Cardiac septum (tissue), 1 donor: ENCODE measurements at regions of chr4 and their contacts with region 1.

Region 1: GRCh38 chr4:25098964-25099891 is 61.0 kb downstream of the SEPSECS start:
- DNase-seq: peak; percentile 89

Region 2: GRCh38 chr4:25088093-25088952 is 10.9 kb before region 1 on chr4:
- intact Hi-C with region 1: loop called (anchors 1 kb)
- DNase-seq: peak; percentile 84

Region 3: DNA sequence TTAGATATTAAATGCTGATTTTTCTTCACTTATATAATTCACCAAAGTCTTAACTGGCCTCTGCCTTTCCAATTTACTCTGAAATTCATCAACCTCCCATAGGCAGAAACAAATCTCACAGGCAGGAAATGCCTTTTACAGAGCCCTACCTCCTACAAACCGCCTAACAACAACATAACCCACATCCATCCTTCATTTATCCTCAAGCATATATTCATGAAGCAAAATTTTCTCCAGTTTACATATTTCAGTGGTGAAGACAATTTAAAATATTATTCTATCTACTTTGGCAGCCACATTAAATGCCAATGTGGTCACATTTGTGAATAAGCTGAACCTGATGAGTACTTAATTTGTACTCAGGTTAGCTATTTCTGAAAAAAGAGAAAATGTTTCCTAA is 30.7 kb after region 1 on chr4:
- intact Hi-C with region 1: loop called (anchors 5 kb)
- DNase-seq: no peak